Tibial artery (tissue), 4 donors: ENCODE measurements at regions of chr13 and their contacts with region 1.

Region 1: DNA sequence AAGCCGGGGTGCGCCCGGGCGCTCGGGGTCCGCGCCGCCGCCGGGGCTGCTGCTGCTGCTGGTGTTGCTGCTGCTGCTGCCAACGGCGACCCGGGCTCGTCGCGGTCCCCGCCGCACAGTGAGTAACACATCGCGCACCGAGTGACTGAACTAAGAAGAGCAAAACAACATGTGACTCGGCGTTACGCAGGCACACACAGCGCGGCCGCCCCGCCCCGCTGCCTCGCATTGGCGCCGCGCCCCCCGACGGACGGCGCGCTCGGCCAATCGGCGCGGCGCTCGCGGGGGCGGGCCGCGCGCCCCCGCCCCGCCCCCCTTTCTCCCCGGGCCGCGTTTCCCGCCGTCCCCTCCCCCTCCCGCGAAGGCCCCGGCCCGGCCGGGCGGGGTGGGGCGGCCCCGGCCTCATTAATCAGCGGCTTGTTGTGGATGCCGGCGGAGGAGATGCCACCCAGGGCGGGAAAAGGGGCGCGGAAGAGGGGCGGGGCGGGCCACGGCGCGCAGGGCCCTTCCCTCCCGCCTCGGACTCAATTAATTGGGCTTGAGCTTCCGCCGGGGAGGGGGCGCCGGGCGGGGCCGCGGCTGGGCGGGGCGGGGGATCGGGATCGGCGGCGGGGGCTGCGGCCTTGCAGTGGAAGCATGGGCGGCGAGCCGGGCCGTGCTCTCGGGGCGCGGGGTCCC is at the start of gene IRS2:
- DNase-seq: peak; percentile 96 to 97
- H3K4me3 ChIP-seq: peak within 1 kb of the TSS; percentile 73 to 88
- H3K27ac ChIP-seq: peak within 1 kb of the TSS; percentile 94 to 98
- H3K4me1 ChIP-seq: peaks cover 0 to 66% (median 42%) of the 10 kb centered on the region in 4 donors
- H3K27me3 ChIP-seq: no peaks in the 10 kb centered on the region
- CTCF ChIP-seq: no peak

Region 2: GRCh38 chr13:108961542-108962125 is 825.0 kb before region 1 on chr13:
- intact Hi-C with region 1: loop called (anchors 5 kb)
- DNase-seq: no peak
- H3K4me3 ChIP-seq: no peak overlapping the region
- H3K27ac ChIP-seq: no peak overlapping the region
- H3K4me1 ChIP-seq: peaks cover 0 to 27% (median 6%) of the 10 kb centered on the region in 4 donors
- H3K27me3 ChIP-seq: no peaks in the 10 kb centered on the region
- CTCF ChIP-seq: peak; percentile 84 to 85

Region 3: GRCh38 chr13:109145631-109146030 is 641.0 kb before region 1 on chr13:
- intact Hi-C with region 1: loop called (anchors 2 kb)
- DNase-seq: no peak
- H3K4me3 ChIP-seq: no peak overlapping the region
- H3K27ac ChIP-seq: no peak overlapping the region
- H3K4me1 ChIP-seq: peaks cover 0 to 10% (median 3%) of the 10 kb centered on the region in 4 donors
- H3K27me3 ChIP-seq: peaks cover 0 to 6% of the 10 kb centered on the region in 2 donors
- CTCF ChIP-seq: peak; percentile 78 to 84

Region 4: DNA sequence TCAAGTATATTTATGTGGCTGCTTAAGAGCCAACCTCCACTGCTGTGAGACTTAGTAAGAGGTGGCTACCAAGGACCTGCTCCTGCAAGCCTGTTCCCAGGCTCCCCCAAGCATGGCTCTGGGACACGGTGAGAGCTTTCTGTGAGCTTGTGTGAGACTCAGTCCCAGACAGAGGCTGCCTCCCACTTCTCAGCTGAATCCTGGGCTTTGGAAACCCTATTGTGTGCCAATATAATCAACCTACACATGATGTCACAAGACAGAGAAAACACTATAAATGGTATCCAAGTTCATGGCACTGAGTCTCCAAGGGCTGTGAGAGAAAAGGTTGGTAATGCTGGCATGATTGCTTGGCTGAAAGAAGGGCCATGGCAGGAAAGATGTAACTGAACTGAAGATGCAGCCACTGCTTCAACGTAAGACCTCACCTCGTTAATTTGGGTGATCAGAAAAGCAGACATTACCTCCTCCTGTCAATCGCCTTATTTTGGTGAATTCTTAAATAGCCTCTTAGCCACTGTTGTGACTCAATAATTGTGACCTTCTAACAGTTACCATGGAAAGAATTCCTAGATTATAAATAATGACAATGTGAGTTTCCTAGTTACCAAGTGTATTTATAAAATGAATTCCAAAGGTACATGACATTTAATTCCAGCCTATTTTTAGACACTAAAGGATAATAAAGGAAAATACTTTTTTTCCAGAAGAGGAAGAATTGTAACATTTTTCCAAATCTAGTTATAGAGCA is 332.3 kb before region 1 on chr13:
- intact Hi-C with region 1: loop called (anchors 10 kb)
- DNase-seq: no peak
- H3K4me3 ChIP-seq: no peak overlapping the region
- H3K27ac ChIP-seq: peak overlapping the region; percentile 58 to 64
- H3K4me1 ChIP-seq: peaks cover 0 to 23% (median 5%) of the 10 kb centered on the region in 4 donors
- H3K27me3 ChIP-seq: no peaks in the 10 kb centered on the region
- CTCF ChIP-seq: no peak

Region 5: DNA sequence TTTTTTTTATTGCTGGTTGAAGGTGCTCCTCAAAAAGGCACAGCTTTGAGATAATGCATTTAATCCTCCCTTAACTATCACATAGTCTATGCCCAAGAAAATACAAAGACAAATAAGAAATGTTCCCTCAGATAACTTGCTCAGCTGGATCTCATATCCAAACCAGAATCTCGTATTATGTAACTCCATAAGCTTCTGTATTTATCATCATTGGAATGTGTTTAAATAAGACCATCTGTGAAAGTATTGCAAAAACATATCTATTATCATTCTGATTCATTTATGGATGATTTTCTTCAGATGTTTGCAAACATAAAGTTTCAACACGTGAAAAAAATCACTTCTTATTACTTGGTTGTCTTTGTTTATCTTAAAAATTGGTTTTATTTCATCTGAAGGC is 191.1 kb before region 1 on chr13:
- intact Hi-C with region 1: no loop called
- DNase-seq: no peak
- H3K4me3 ChIP-seq: no peak overlapping the region
- H3K27ac ChIP-seq: no peak overlapping the region
- H3K4me1 ChIP-seq: no peaks in the 10 kb centered on the region
- H3K27me3 ChIP-seq: no peaks in the 10 kb centered on the region
- CTCF ChIP-seq: no peak

Region 6: GRCh38 chr13:109869312-109870237 is 83.0 kb after region 1 on chr13:
- intact Hi-C with region 1: no loop called
- DNase-seq: peak; percentile 27 to 88
- H3K4me3 ChIP-seq: peak overlapping the region; percentile 44 to 48
- H3K27ac ChIP-seq: peak overlapping the region; percentile 29 to 48
- H3K4me1 ChIP-seq: peaks cover 0 to 21% (median 6%) of the 10 kb centered on the region in 4 donors
- H3K27me3 ChIP-seq: no peaks in the 10 kb centered on the region
- CTCF ChIP-seq: no peak

Region 7: GRCh38 chr13:110023729-110024644 is 237.4 kb after region 1 on chr13:
- intact Hi-C with region 1: loop called (anchors 10 kb)
- DNase-seq: peak; percentile 69 to 92
- H3K4me3 ChIP-seq: peak overlapping the region in 1 of 2 donors; percentile 16
- H3K27ac ChIP-seq: peak overlapping the region; percentile 87
- H3K4me1 ChIP-seq: peaks cover 0 to 47% (median 19%) of the 10 kb centered on the region in 4 donors
- H3K27me3 ChIP-seq: no peaks in the 10 kb centered on the region
- CTCF ChIP-seq: peak in 1 of 2 experiments; percentile 26

Region 8: DNA sequence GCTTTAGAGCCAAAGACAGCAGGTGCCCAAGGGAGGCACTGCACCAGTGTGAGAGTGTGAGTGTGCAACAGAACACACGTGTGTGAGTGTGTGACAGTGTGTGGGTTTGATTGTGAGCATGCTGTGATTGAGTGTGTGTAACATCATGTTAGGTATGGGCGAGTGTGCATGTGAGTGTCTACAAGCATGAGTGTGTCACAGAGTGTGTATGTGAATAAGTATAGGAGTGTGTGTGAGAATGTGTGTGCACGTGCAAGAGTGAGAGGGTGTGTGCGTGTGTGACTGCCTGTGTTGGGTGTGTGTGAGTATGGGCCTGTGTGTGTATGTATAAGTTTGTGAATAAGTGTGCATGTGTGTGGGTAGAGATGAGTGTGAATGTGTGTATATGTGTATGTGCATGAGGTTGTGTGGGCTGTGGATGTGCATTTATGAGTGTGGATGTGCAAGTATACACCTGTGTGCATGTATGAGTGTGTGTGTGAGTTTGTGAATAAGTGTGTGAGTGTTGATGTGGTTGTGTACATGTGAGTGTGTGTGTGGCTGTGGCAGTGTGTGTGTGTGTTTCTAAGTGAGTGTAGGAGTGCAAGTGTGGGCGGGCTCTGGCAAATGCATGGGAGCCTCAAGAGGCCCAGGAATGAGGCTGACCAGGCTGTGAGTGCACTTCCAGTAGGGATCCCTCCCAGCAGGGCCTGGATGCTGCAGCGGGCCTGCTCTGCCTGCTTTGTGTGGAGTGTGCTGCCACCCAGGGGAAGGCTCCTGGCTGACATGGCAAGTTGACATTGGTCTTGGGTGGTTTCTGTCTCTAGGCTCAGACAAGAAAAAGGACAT is 322.0 kb after region 1 on chr13:
- intact Hi-C with region 1: loop called (anchors 5 kb)
- DNase-seq: peak; percentile 80 to 91
- H3K4me3 ChIP-seq: no peak overlapping the region
- H3K27ac ChIP-seq: peak overlapping the region; percentile 69 to 73
- H3K4me1 ChIP-seq: peaks cover 0 to 44% (median 23%) of the 10 kb centered on the region in 4 donors
- H3K27me3 ChIP-seq: no peaks in the 10 kb centered on the region
- CTCF ChIP-seq: peak; percentile 65 to 80